HEK293T (cell line): ENCODE measurements at regions of chr15 and their contacts with region 1.

Region 1: DNA sequence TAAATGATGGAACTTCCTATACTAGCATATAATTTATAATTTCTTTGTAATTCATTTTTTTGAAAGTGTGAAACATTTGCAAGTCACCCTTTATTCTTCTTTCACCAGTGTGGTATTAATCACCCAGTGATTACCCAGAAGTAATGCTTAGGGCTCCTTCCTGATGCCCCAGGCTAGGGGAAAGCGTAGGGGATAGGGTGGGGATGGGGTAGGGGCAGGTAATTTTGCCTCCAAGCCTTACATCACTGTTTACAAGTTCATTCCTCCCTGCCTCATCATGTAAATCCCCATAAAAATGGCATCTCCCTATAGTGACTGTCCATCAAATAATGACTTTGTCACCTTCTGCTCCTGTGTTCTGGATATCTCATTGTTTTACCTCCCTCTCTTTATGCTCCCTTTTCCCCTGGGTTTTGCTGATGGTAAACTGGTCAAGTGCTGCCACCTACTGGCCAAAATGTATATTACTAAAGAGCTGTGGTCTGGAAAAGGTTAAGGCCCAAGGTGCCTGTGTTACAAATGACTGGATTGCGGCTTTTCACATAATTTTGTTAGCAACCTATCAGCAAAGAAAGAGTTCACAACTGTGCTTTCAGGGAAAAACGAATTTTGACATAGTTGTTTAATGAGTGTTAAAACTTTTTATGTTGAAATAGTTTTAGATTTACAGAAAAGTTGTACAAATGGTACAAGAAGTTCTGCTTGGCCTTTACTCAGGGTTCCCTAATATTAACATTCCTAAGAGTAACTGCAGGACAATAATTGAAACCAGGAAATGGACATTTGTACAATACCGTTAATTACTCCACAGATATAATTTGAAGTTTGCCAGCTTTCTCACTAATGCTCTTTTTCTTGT is 54.7 kb downstream of the ONECUT1 start:
- DNase-seq: peak; percentile 63

Region 2: DNA sequence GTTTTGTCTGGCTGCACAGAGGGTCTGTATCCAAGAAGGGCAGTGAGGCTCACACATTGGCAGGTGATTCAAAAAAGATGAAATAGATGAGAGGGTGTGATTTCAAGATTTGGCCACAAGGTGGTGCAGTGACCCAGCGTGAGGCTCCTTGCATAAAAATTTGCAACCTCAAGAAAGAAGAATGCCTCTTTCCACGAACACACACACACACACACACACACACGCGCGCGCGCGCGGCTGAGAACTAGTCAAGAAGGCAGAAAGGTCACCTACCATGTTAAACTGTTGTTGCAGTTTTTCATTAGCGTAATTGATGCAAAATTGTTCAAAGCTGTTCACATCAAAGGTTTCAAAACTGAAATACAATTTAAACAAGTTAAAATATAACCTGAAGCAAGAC is 479.1 kb before region 1 on chr15:
- CTCF ChIA-PET with region 1: interaction called, 18 read pairs
- POLR2A ChIA-PET with region 1: no interaction called
- DNase-seq: peak; percentile 61

Region 3: DNA sequence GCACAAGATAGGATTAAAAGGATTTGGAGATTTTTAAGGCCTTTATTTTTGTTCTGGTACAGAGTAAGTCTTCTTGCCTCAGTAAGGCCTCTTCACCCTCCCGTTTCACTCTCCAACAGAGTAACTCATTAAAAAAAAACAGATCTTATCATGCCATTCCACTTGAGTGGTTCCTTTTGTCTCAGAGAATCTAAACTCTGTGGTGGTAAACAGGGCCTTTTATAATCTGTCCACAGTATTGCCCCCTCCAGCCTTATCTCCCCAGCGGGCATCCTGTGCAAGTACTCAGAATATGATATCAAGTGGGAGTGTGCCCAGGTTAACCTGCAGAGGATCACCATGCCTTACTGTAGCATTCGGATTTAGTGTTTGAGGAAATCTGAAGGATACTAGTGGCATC is 36.0 kb before region 1 on chr15:
- CTCF ChIA-PET with region 1: no interaction called
- POLR2A ChIA-PET with region 1: no interaction called
- DNase-seq: no peak

Region 4: GRCh38 chr15:52716536-52716935 is 18.9 kb before region 1 on chr15:
- CTCF ChIA-PET with region 1: interaction called, 11 read pairs
- POLR2A ChIA-PET with region 1: no interaction called
- DNase-seq: no peak

Region 5: DNA sequence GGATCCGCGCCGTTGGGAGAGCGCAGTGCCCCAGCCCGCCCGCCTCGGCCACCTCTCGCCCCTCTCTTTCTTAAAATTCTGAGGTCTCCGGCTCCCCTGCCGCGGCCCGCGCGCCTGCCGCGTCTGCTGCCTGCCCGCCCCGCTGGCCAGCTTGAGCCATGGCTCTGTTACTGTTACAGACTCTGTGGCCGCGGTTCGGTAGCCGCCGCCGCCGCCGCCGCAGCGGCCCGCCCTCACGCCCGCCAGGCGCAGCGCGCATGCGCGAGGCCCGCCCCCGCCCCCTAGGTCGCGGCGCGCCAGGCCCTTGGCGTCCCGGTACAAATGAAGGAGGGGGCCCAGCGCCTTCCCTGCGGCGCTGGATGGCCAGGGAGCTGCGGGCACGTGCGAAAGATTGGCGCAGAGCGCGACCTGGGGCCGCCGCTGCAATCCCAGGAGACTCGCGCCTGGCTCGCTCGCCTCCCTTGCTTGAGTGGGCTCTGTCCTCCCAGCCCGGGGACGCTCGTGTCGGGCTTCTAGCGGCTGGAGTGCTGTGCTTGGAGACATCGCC is 54.8 kb after region 1 on chr15 and contains the start of gene ONECUT1:
- CTCF ChIA-PET with region 1: no interaction called
- POLR2A ChIA-PET with region 1: no interaction called
- DNase-seq: peak; percentile 83